CD8-positive, alpha-beta T cell (primary cell): ENCODE measurements at regions of chr15 and their contacts with region 1.

Region 1: DNA sequence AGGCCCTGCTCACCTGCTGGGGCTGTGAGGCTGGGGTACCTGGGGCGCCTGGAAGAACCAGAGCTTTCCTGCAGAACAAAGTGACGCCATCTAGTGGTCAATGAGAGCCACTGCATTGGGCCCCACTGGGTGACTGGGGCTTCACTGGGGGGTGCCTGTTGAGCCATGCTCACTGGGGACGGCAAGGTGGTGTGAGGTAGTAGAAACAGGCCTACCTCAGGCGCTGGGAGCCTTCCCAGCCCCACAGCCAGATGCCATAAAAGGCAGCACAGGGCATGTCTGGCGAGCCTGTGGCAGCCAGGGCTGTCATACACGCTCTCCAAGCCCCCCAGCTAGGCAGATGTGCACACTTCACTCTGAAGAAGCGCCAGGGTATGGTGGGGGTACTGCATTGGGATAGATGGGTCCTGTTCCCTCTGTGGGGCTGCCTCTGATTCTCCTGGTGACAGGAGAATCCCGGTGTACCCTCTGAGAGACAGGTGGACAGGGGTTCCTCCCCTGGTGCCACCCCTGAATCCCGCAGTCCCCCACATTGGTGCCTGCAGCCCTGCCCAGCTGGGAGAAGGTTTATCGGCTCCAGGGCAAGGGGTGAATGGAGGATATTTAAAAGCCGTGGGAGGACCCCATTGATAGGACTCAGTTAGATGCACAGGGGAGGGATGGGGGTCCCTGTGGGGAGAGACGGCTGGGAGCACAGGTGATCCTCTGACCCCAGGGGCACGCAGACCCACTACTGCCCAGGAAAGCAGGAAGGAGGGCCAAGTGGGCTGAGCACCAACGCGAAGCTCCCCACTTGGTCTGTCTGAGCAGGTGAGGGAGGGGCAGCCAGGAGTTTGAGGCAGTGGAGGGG is 178.8 kb downstream of the NSMCE3 start:
- DNase-seq: peak; percentile 21 to 70 (median 52)
- ATAC-seq: peak; percentile 77
- H3K4me3 ChIP-seq: peak overlapping the region in 1 of 2 experiments; percentile 30
- H3K4me3 Mint-ChIP-seq: no peak overlapping the region
- H3K27ac ChIP-seq: peak overlapping the region in 1 of 2 experiments; percentile 74
- H3K27ac Mint-ChIP-seq: peak overlapping the region; percentile 55
- H3K4me1 ChIP-seq: peaks cover 33% of the 10 kb centered on the region
- H3K4me1 Mint-ChIP-seq: peaks cover 39% of the 10 kb centered on the region
- H3K27me3 ChIP-seq: no peaks in the 10 kb centered on the region
- H3K27me3 Mint-ChIP-seq: no peaks in the 10 kb centered on the region
- CTCF ChIP-seq: peak; percentile 80

Region 2: GRCh38 chr15:28873541-28874190 is 217.2 kb before region 1 on chr15:
- CTCF ChIA-PET with region 1: interaction called, 37 read pairs
- POLR2A ChIA-PET with region 1: no interaction called
- intact Hi-C with region 1: loop called (anchors 1 kb)
- DNase-seq: peak in 6 of 9 experiments; percentile 37 to 74 (median 66)
- ATAC-seq: peak; percentile 88
- H3K4me3 ChIP-seq: no peak overlapping the region
- H3K4me3 Mint-ChIP-seq: no peak overlapping the region
- H3K27ac ChIP-seq: no peak overlapping the region
- H3K27ac Mint-ChIP-seq: no peak overlapping the region
- H3K4me1 ChIP-seq: peaks cover 21% of the 10 kb centered on the region
- H3K4me1 Mint-ChIP-seq: peaks cover 21% of the 10 kb centered on the region
- H3K27me3 ChIP-seq: no peaks in the 10 kb centered on the region
- H3K27me3 Mint-ChIP-seq: no peaks in the 10 kb centered on the region
- CTCF ChIP-seq: peak; percentile 60

Region 3: DNA sequence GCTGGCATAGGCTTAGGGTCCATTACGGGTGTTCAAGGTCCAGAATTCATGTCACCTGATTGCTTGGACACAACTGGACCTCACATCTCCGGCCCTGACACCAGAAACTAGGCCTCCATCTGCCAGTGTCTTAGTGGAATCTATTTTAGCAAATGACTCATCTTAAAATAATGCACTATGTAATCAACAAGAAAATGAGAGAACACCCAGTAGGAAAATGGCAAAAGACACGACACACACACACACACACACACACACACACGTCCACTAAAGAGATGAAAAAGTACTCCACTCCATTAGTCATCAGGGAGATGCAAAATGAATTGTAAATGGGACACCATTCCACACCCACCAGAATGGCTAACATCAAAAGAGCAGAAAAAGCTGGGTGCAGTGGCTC is 193.9 kb before region 1 on chr15:
- CTCF ChIA-PET with region 1: no interaction called
- POLR2A ChIA-PET with region 1: no interaction called
- intact Hi-C with region 1: no loop called
- DNase-seq: no peak
- ATAC-seq: no peak
- H3K4me3 ChIP-seq: no peak overlapping the region
- H3K4me3 Mint-ChIP-seq: no peak overlapping the region
- H3K27ac ChIP-seq: no peak overlapping the region
- H3K27ac Mint-ChIP-seq: no peak overlapping the region
- H3K4me1 ChIP-seq: peaks cover 71% of the 10 kb centered on the region
- H3K4me1 Mint-ChIP-seq: peaks cover 71% of the 10 kb centered on the region
- H3K27me3 ChIP-seq: no peaks in the 10 kb centered on the region
- H3K27me3 Mint-ChIP-seq: no peaks in the 10 kb centered on the region
- CTCF ChIP-seq: no peak

Region 4: DNA sequence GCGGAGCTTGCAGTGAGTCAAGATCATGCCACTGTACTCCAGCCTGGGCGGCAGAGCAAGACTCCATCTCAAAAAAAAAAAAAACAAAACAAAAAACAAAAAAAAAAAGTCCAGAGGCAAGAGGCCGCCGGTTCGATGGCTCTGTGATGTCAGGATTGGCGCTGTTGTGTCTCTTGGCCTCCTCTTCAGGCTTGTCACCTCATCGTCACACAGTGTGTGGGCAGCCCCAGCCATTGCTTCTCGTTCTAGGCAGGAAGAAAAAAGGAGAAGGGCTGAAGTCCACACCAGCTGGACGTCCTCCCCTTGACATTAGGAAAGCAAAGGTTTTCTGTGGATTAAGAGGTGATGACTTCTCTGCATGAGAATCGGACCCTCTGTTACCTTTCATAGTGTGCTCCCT is 12.3 kb before region 1 on chr15:
- CTCF ChIA-PET with region 1: interaction called, 11 read pairs
- POLR2A ChIA-PET with region 1: interaction called, 3 read pairs
- intact Hi-C with region 1: no loop called
- DNase-seq: no peak
- ATAC-seq: no peak
- H3K4me3 ChIP-seq: no peak overlapping the region
- H3K4me3 Mint-ChIP-seq: no peak overlapping the region
- H3K27ac ChIP-seq: no peak overlapping the region
- H3K27ac Mint-ChIP-seq: no peak overlapping the region
- H3K4me1 ChIP-seq: no peaks in the 10 kb centered on the region
- H3K4me1 Mint-ChIP-seq: peaks cover 2% of the 10 kb centered on the region
- H3K27me3 ChIP-seq: no peaks in the 10 kb centered on the region
- H3K27me3 Mint-ChIP-seq: no peaks in the 10 kb centered on the region
- CTCF ChIP-seq: no peak